HAP-1 (cell line): ENCODE measurements at regions of chr15 and their contacts with region 1.

Region 1: GRCh38 chr15:57205996-57206395 is 170.3 kb upstream of the CGNL1 start:
- DNase-seq: peak; percentile 93 to 97
- H3K4me3 ChIP-seq: no peak overlapping the region
- H3K4me1 ChIP-seq: peaks cover 17% of the 10 kb centered on the region
- H3K27me3 ChIP-seq: no peaks in the 10 kb centered on the region

Region 2: GRCh38 chr15:57152666-57153539 is 53.1 kb before region 1 on chr15:
- in situ Hi-C with region 1: loop called (anchors 5 kb)
- DNase-seq: no peak
- H3K4me3 ChIP-seq: no peak overlapping the region
- H3K4me1 ChIP-seq: peaks cover 11% of the 10 kb centered on the region
- H3K27me3 ChIP-seq: no peaks in the 10 kb centered on the region

Region 3: DNA sequence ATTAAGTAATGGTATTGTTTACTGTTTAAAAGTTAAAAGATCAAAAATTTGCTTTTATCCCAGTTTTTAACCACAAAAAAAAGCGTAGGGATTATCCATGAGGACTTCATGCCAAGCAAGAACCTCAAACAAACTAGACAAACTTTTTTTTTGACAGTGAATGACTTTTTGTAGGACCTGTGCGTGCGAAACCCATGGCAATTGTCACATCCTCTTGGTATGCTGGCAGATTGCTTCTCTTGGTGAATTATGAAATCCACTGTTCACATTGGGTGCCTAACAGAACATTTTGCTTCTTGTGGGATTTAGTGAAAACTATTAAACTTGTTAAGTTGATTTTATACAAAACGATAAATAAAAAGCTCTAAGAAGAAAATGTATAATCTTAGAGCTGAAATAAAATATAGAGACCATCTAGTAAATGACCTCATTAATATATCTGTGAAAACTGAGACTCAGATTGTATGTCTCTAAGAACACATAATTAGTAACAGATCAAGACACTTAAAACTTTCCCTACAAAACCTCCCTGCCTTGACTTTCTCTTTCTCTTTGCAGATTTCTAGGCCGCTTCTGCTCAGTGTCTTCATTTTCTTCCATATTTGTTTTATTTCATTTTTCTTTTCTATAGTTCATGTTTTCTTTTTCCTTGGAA is 83.1 kb after region 1 on chr15:
- in situ Hi-C with region 1: no loop called
- DNase-seq: no peak
- H3K4me3 ChIP-seq: no peak overlapping the region
- H3K4me1 ChIP-seq: no peaks in the 10 kb centered on the region
- H3K27me3 ChIP-seq: no peaks in the 10 kb centered on the region

Region 4: GRCh38 chr15:57541805-57542504 is 336.0 kb after region 1 on chr15:
- in situ Hi-C with region 1: no loop called
- DNase-seq: peak; percentile 69 to 86
- H3K4me3 ChIP-seq: no peak overlapping the region
- H3K4me1 ChIP-seq: no peaks in the 10 kb centered on the region
- H3K27me3 ChIP-seq: no peaks in the 10 kb centered on the region